Activated CD4-positive, alpha-beta T cell treated with anti-CD3 and anti-CD28 coated beads for 36 hours (primary cell): ENCODE measurements at regions of chr1 and their contacts with region 1.

Region 1: DNA sequence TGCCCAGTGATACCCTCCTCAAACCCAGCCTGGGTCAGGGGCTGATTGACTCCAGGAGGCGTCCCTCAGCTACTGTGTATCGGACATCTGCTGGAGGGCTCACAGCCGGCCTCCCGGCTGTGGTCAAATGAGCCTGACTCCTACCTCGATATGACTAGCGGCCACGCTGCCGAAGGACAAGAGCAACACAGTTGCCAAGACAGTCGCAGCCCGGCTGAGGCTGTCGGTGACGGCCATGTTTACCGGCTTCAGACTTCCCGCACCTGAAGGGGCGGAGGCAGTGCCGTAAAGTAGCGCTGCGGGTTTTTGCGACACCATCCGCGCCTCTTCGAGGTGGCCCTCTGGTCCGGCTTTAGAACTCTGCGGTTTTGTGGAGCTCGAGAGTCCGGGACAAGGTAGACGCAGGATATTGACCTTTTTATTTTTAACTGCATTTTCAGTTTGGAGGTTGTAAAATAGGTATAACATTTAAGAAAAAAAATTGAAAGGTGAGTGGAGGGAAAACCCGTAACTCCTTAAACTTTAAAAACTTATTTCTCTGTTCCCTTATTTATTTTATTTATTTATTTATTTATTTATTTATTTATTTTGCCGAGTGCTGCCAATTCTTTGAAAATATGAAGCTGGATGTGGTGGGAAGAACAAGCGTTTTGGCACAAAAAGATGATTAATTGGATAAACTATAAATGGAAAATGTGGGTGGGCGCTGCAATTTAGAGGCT is at the start of gene PIGK:
- DNase-seq: peak; percentile 94
- ATAC-seq: peak; percentile 93
- H3K4me3 Mint-ChIP-seq: peak within 1 kb of the TSS; percentile 92
- H3K27ac Mint-ChIP-seq: peak within 1 kb of the TSS; percentile 92
- H3K4me1 Mint-ChIP-seq: peaks cover 38% of the 10 kb centered on the region
- H3K27me3 Mint-ChIP-seq: no peaks in the 10 kb centered on the region
- total RNA-seq, gene PIGK: 19.3 to 19.7 TPM

Region 2: DNA sequence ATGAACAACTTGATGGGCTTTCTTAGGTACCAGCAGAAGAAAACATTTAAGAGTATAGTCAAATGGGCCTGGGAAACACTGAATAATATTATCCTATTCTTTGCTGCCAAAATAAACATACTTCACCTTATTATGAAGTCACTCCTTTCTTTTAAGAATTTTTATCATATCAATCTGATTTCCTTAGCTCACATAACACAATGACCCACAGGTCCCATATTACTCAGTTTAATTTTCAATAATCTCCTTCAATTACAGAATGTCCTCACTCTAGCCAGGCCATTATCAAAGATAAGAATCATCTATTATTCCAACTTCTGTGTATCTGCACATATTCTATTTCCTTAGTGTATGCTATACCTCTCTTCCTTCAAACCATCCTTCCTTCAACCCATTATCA is 63.1 kb before region 1 on chr1:
- CTCF ChIA-PET with region 1: no interaction called
- POLR2A ChIA-PET with region 1: no interaction called
- intact Hi-C with region 1: no loop called
- DNase-seq: no peak
- ATAC-seq: no peak
- H3K4me3 Mint-ChIP-seq: no peak overlapping the region
- H3K27ac Mint-ChIP-seq: no peak overlapping the region
- H3K4me1 Mint-ChIP-seq: peaks cover 7% of the 10 kb centered on the region
- H3K27me3 Mint-ChIP-seq: no peaks in the 10 kb centered on the region

Region 3: DNA sequence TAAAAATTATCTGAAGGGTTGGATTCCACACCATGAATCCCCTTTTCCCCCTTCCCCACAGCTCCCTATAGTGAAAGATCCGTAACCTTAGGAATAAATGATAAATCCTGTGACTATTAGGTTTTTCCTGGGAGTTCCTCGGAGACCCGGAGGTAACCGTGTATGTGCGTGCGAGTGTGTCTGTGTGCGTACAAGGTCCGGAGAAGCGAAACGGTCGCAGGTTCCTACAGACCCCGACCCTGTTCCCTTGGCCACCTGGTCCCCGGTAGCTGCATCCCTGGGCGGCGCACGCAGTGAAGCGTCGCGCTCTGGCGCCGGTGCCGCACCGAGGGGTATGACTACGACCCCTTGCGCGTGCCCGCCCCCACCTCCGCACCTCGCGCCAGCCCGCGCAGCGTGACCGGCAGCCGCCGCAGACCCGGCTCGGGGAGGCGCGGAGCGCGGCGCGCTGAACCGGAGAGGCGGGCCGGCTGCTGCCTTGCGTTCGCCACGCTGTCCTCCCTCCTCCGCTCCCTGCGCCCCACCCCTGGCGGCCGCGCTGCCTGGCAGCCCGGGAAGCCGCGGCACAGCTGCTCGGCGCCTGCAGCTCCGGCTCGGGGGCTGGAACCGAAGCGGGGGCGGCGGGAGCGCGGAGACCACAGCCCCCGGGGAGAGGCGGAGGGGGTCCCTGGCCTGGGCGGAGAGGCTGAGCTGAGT is 62.3 kb after region 1 on chr1 and contains the start of gene AK5:
- CTCF ChIA-PET with region 1: interaction called, 3 read pairs
- POLR2A ChIA-PET with region 1: no interaction called
- intact Hi-C with region 1: loop called (anchors 1 to 5 kb)
- DNase-seq: peak; percentile 75
- ATAC-seq: peak; percentile 77
- H3K4me3 Mint-ChIP-seq: peak within 1 kb of the TSS; percentile 70
- H3K27ac Mint-ChIP-seq: peak within 1 kb of the TSS; percentile 64
- H3K4me1 Mint-ChIP-seq: peaks cover 32% of the 10 kb centered on the region
- H3K27me3 Mint-ChIP-seq: no peaks in the 10 kb centered on the region
- total RNA-seq, gene AK5: 9.9 TPM

Region 4: DNA sequence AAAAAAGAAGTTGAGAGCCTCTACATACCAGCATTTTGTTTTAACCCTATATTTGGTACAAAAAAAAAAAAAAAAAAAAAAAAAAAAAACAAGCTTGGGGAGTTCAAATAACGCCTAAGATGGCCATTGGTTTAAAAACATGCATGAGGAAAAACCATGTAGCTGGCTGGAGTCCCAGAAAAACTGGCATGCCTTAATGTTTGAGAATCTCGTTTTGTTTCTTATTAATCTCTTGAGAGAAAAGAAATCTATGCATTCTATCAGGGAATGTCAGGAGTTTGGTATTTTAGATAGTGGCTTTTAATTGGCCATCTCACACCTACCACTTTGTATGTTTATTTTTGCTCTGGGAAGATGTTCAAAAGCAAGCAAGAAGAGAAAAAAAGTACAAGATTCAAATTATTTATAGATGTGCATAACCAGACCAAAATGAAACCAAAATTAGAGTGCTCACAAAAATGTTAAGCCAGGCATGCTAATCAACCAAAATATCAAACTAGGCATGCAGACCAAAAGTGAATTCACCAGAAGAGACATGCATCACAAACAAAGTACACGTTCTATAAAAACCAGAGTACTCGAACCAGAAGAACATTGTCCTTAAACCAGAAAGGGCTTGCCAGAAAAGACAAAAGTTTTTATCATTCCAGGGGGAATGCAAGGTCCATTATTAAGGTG is 219.0 kb after region 1 on chr1:
- CTCF ChIA-PET with region 1: interaction called, 5 read pairs
- POLR2A ChIA-PET with region 1: no interaction called
- intact Hi-C with region 1: loop called in 1 of 2 experiments (anchors 5 kb)
- DNase-seq: no peak
- ATAC-seq: no peak
- H3K4me3 Mint-ChIP-seq: peak overlapping the region; percentile 27
- H3K27ac Mint-ChIP-seq: peak overlapping the region; percentile 88
- H3K4me1 Mint-ChIP-seq: peaks cover 35% of the 10 kb centered on the region
- H3K27me3 Mint-ChIP-seq: no peaks in the 10 kb centered on the region

Region 5: DNA sequence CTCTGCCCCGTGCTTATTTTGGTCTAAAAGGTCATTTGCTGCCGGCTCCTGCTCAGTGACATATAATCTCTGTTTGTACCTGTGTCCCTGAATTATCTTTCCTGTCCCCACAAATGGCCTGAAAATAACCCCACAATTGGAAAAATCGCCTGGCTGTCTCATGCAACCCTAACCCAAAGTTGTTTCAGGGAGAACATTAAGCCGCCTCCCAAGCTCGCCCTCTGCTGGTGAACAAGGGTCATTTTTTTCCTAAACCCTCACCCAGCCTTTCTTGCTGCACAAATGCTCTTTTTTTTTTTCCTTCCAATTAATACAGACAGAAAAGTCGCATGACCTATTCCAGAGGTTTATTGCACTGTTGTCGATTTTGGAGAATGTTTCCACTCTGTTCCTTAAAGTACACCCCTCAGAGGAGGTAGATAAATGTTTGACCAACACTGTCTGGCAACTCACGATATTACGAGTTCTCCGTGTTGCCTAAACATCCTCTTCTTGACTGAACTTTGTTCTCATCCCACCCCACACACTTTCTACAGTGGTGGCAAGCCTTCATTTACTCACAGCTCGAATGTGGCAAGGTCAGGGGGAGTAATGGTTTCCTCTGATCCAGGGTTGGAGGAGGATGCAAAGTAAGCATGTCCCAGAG is 314.5 kb after region 1 on chr1:
- CTCF ChIA-PET with region 1: no interaction called
- POLR2A ChIA-PET with region 1: no interaction called
- intact Hi-C with region 1: loop called in 1 of 2 experiments (anchors 2 kb)
- DNase-seq: peak; percentile 75
- ATAC-seq: peak; percentile 70
- H3K4me3 Mint-ChIP-seq: no peak overlapping the region
- H3K27ac Mint-ChIP-seq: peak overlapping the region; percentile 69
- H3K4me1 Mint-ChIP-seq: peaks cover 7% of the 10 kb centered on the region
- H3K27me3 Mint-ChIP-seq: no peaks in the 10 kb centered on the region

Region 6: DNA sequence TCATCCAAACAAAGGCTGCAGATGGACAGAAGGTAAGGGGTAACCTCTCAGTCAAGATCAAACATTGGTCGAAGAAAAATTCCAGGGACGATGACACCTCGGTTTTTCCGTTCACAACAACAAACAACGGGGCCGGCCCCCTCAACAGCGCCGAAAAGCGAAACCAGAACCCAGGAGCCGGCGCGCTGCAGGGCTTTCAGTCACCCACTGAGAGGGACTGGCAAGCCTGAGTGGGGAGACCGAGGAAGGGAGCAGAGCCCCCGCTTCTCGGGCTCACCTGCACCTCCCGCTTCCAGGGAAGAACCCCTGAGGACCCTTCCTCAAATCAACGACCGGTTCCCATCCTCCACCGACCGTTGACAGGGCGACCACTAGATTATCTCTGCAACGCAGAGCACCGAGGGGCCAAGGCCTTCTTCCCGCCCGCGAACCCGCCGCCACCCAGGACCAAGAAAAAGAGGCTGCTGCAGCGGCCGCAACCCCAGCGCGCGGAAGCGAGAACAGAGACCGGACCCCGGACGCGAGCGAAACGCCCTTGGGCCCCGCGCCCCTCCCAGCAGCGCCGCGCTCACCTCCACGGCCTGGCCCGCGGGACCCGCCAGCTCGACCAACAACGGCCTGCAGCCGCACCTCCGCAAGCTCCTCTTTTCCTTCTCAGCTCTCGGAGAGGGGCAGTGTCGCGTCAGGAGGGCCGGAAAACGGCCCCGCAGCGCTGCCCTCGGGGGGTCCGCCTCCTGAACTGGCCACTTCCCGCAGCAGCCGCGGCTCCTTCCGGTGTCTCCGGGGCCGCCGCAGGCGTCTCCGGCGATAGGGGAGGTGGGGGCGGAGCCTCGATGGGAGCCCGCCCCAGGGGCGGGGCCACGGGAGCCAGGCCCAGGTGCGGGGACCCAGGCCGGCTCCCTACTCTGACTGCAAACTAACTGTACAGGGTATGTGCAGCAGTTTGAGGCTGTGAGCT is 540.0 kb after region 1 on chr1 and contains the start of gene USP33:
- CTCF ChIA-PET with region 1: no interaction called
- POLR2A ChIA-PET with region 1: no interaction called
- intact Hi-C with region 1: loop called in 1 of 2 experiments (anchors 10 kb)
- DNase-seq: peak; percentile 95
- ATAC-seq: peak; percentile 98
- H3K4me3 Mint-ChIP-seq: peak within 1 kb of the TSS; percentile 89
- H3K27ac Mint-ChIP-seq: peak within 1 kb of the TSS; percentile 92
- H3K4me1 Mint-ChIP-seq: peaks cover 41% of the 10 kb centered on the region
- H3K27me3 Mint-ChIP-seq: no peaks in the 10 kb centered on the region
- total RNA-seq, gene USP33: 36.3 to 36.8 TPM

Region 7: GRCh38 chr1:77779529-77780281 is 560.4 kb after region 1 on chr1 and contains the start of gene MIGA1:
- CTCF ChIA-PET with region 1: no interaction called
- POLR2A ChIA-PET with region 1: no interaction called
- intact Hi-C with region 1: loop called in 1 of 2 experiments (anchors 1 kb)
- DNase-seq: peak; percentile 91
- ATAC-seq: peak; percentile 96
- H3K4me3 Mint-ChIP-seq: peak within 1 kb of the TSS; percentile 91
- H3K27ac Mint-ChIP-seq: peak within 1 kb of the TSS; percentile 93
- H3K4me1 Mint-ChIP-seq: peaks cover 34% of the 10 kb centered on the region
- H3K27me3 Mint-ChIP-seq: no peaks in the 10 kb centered on the region
- total RNA-seq, gene MIGA1: 7.2 to 9.0 TPM